Activated naive CD4-positive, alpha-beta T cell treated with anti-CD3 and anti-CD28 coated beads for 36 hours (primary cell): ENCODE measurements at regions of chr3 and their contacts with region 1.

Region 1: GRCh38 chr3:189841473-189842210 is 210.5 kb downstream of the TP63 start:
- DNase-seq: peak; percentile 8
- H3K4me3 Mint-ChIP-seq: no peak overlapping the region
- H3K27ac Mint-ChIP-seq: peak overlapping the region; percentile 59
- H3K4me1 Mint-ChIP-seq: peaks cover 21% of the 10 kb centered on the region
- H3K27me3 Mint-ChIP-seq: no peaks in the 10 kb centered on the region

Region 2: GRCh38 chr3:189270248-189270832 is 571.3 kb before region 1 on chr3:
- CTCF ChIA-PET with region 1: interaction called, 3 read pairs
- intact Hi-C with region 1: loop called (anchors 5 kb)
- DNase-seq: peak; percentile 59
- H3K4me3 Mint-ChIP-seq: no peak overlapping the region
- H3K27ac Mint-ChIP-seq: no peak overlapping the region
- H3K4me1 Mint-ChIP-seq: peaks cover 13% of the 10 kb centered on the region
- H3K27me3 Mint-ChIP-seq: no peaks in the 10 kb centered on the region

Region 3: GRCh38 chr3:189563866-189564563 is 277.6 kb before region 1 on chr3:
- CTCF ChIA-PET with region 1: no interaction called
- intact Hi-C with region 1: loop called (anchors 5 kb)
- DNase-seq: peak; percentile 79
- H3K4me3 Mint-ChIP-seq: no peak overlapping the region
- H3K27ac Mint-ChIP-seq: no peak overlapping the region
- H3K4me1 Mint-ChIP-seq: peaks cover 16% of the 10 kb centered on the region
- H3K27me3 Mint-ChIP-seq: no peaks in the 10 kb centered on the region

Region 4: GRCh38 chr3:189586941-189587663 is 254.5 kb before region 1 on chr3:
- CTCF ChIA-PET with region 1: no interaction called
- intact Hi-C with region 1: loop called (anchors 1 kb)
- DNase-seq: no peak
- H3K4me3 Mint-ChIP-seq: no peak overlapping the region
- H3K27ac Mint-ChIP-seq: peak overlapping the region; percentile 15
- H3K4me1 Mint-ChIP-seq: peaks cover 28% of the 10 kb centered on the region
- H3K27me3 Mint-ChIP-seq: peaks cover 6% of the 10 kb centered on the region

Region 5: GRCh38 chr3:189927975-189928895 is 86.6 kb after region 1 on chr3:
- CTCF ChIA-PET with region 1: no interaction called
- intact Hi-C with region 1: loop called (anchors 2 kb)
- DNase-seq: no peak
- H3K4me3 Mint-ChIP-seq: no peak overlapping the region
- H3K27ac Mint-ChIP-seq: no peak overlapping the region
- H3K4me1 Mint-ChIP-seq: peaks cover 20% of the 10 kb centered on the region
- H3K27me3 Mint-ChIP-seq: no peaks in the 10 kb centered on the region

Region 6: GRCh38 chr3:190101320-190102011 is 259.8 kb after region 1 on chr3:
- CTCF ChIA-PET with region 1: no interaction called
- intact Hi-C with region 1: no loop called
- DNase-seq: no peak
- H3K4me3 Mint-ChIP-seq: peak overlapping the region; percentile 34
- H3K27ac Mint-ChIP-seq: no peak overlapping the region
- H3K4me1 Mint-ChIP-seq: peaks cover 8% of the 10 kb centered on the region
- H3K27me3 Mint-ChIP-seq: peaks cover 19% of the 10 kb centered on the region

Region 7: DNA sequence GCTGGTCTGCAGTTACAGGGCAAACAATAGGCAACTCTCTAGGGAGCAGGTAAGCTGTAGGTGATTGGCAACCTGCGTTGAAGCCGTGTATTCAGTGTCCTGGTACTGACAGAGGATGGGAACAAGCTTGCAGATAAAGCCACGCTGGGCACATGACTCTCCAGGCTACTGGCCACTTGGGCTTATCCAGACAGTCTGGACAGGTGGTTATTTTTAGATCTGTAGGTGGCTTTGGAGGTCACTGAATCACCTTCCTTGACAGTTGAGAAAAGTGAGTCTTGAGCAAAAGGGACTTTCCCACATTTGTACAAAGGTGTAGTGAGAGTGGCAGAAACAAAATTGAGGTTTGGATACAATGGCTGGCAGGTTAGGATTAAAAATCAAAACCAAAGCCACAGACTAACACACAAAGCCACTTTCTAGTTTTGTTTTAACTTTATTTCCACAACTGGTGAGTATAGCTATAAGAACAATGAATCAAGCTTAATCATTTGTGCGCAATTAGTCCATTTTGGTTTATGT is 650.0 kb after region 1 on chr3:
- CTCF ChIA-PET with region 1: no interaction called
- intact Hi-C with region 1: loop called (anchors 5 kb)
- DNase-seq: peak; percentile 30
- H3K4me3 Mint-ChIP-seq: no peak overlapping the region
- H3K27ac Mint-ChIP-seq: no peak overlapping the region
- H3K4me1 Mint-ChIP-seq: peaks cover 24% of the 10 kb centered on the region
- H3K27me3 Mint-ChIP-seq: peaks cover 46% of the 10 kb centered on the region